Endothelial cell of umbilical vein (primary cell): ENCODE measurements at regions of chr10 and their contacts with region 1.

Region 1: DNA sequence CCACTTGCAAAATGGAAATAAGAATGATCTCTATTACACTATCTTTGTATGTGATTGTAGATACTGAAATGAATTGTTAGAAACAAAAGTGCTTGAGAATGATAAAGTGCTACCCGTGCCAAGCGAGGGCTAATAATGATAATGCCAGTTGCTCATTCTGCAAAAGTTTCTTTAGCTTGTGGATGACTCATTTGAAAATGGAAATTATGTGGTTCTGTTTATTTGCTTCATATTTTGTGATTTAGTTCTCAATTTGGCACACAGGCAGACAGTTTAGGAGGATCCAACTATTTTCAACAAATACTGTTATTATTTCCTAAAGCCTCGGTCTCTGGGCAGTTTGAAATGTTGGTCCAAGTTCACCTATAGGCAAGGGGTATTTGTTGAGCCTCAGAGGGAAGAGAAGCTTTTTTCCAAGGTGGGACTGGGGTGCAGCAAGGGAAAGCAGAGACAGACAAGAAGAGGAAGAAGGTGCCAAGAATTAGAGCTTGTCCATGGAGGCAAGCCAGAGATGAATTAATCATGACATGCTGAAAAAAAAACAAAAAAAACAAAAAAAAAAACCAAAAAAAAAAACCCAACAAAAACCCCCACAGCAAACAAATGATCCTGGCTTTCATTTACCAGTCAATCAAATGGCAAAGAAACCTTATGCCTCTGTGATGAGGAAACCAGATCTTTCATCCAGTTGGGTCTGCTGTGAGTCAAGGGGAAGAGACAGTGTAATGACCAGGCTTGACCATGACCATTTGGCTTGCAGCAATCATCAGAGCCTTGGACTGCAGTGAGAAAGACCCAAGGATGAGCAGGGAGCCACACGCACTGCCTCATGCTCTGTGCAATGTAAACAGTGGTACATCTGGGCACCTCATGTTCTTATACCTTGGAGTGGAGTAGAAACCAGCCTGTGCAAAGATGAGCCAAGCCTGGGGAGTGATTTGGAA is 285.0 kb upstream of the HABP2 start:
- DNase-seq: no peak
- H3K4me3 ChIP-seq: no peak overlapping the region
- H3K27ac ChIP-seq: no peak overlapping the region
- H3K4me1 ChIP-seq: no peaks in the 10 kb centered on the region
- H3K27me3 ChIP-seq: no peaks in the 10 kb centered on the region
- CTCF ChIP-seq: no peak
- POLR2A ChIP-seq: no peak

Region 2: GRCh38 chr10:112361951-112362751 is 905.7 kb before region 1 on chr10:
- CTCF ChIA-PET with region 1: no interaction called
- POLR2A ChIA-PET with region 1: no interaction called
- dilution Hi-C with region 1: no loop called
- intact Hi-C with region 1: no loop called
- DNase-seq: peak; percentile 93
- H3K4me3 ChIP-seq: no peak overlapping the region
- H3K27ac ChIP-seq: peak overlapping the region; percentile 56
- H3K4me1 ChIP-seq: peaks cover 28% of the 10 kb centered on the region
- H3K27me3 ChIP-seq: no peaks in the 10 kb centered on the region
- CTCF ChIP-seq: peak in 1 of 2 donors; percentile 7
- POLR2A ChIP-seq: no peak

Region 3: DNA sequence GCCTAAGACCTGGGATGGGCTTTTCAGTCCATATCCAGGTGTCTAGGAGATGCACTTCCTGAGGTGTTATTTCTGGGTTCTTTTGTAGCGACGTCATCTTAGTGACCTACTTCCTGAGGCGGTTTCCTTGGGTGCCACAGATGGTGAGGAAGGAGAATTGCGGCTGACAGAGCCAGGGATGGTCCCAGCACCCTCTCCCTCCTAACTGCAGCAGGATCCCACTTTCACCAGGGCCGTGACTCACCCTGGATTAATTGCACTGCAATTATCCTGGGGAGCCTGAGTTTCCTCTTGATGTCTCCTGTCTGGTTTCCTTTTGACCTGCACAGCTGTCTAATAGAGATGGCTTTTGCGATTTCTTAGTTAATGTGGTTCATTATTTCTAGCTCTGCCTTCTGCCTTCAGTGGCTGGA is 46.1 kb before region 1 on chr10:
- CTCF ChIA-PET with region 1: no interaction called
- POLR2A ChIA-PET with region 1: no interaction called
- dilution Hi-C with region 1: no loop called
- intact Hi-C with region 1: loop called (anchors 5 kb)
- DNase-seq: no peak
- H3K4me3 ChIP-seq: no peak overlapping the region
- H3K27ac ChIP-seq: no peak overlapping the region
- H3K4me1 ChIP-seq: peaks cover 3% of the 10 kb centered on the region
- H3K27me3 ChIP-seq: peaks cover 0 to 2% of the 10 kb centered on the region in 2 experiments
- CTCF ChIP-seq: no peak
- POLR2A ChIP-seq: no peak

Region 4: GRCh38 chr10:113907166-113907565 is 639.3 kb after region 1 on chr10:
- CTCF ChIA-PET with region 1: no interaction called
- POLR2A ChIA-PET with region 1: no interaction called
- dilution Hi-C with region 1: no loop called
- intact Hi-C with region 1: no loop called
- DNase-seq: no peak
- H3K4me3 ChIP-seq: no peak overlapping the region
- H3K27ac ChIP-seq: no peak overlapping the region
- H3K4me1 ChIP-seq: no peaks in the 10 kb centered on the region
- H3K27me3 ChIP-seq: no peaks in the 10 kb centered on the region
- CTCF ChIP-seq: no peak
- POLR2A ChIP-seq: no peak